Caco-2 (cell line): ENCODE measurements at regions of chr4 and their contacts with region 1.

Region 1: DNA sequence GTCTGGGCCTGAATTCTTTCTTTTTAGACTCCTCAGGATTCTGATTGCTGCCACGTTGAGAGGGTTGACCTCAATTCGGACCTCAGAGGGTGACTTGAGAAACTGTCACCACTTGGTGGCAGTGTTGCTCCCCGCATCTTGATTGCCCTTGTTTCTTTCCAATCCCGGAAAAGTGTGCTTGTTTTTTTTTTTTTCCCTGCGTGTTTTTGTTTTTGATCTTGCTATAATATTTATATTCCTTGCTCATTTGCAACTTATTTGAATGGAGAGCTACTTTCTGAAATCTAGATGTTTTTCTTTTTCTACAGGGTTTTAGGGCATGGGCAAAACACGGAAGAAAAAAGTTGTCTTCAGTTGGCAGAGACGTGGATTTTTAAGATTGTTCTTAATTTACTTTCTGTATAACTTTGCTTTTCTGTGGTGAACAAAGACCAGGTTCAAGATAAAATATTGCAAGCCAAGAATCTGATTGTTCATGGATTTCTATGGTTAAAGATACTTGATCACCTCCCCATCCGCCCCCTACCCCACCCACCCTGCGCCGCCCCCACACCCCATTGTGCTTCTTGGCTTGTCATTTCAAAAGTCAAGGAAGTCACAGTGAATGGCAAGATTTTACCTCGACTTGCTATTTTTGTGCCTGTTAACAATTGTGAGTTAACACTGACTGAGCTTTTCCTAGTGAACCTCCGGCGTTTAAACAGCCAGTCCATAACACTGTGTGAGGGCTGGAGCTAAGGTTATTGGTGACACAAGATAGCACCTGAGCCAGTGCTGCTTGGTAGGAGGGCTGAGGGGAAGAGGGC is 102.1 kb downstream of the PTTG2 start:
- DNase-seq: peak; percentile 65 to 75
- H3K4me3 ChIP-seq: no peak overlapping the region
- H3K4me3 Mint-ChIP-seq: no peak overlapping the region
- H3K27ac Mint-ChIP-seq: no peak overlapping the region
- H3K4me1 ChIP-seq: no peaks in the 10 kb centered on the region
- H3K4me1 Mint-ChIP-seq: no peaks in the 10 kb centered on the region
- H3K27me3 ChIP-seq: no peaks in the 10 kb centered on the region
- H3K27me3 Mint-ChIP-seq: no peaks in the 10 kb centered on the region
- CTCF ChIP-seq: peak; percentile 70 to 82

Region 2: GRCh38 chr4:38149997-38150671 is 87.8 kb after region 1 on chr4:
- CTCF ChIA-PET with region 1: interaction called, 11 read pairs
- POLR2A ChIA-PET with region 1: no interaction called
- intact Hi-C with region 1: no loop called
- DNase-seq: no peak
- H3K4me3 ChIP-seq: no peak overlapping the region
- H3K4me3 Mint-ChIP-seq: no peak overlapping the region
- H3K27ac Mint-ChIP-seq: no peak overlapping the region
- H3K4me1 ChIP-seq: 0 out of 2 replicates have a peak, but pooled peaks cover 3% of the 10 kb centered on the region
- H3K4me1 Mint-ChIP-seq: peaks cover 12% of the 10 kb centered on the region
- H3K27me3 ChIP-seq: no peaks in the 10 kb centered on the region
- H3K27me3 Mint-ChIP-seq: no peaks in the 10 kb centered on the region
- CTCF ChIP-seq: no peak

Region 3: GRCh38 chr4:38166082-38166481 is 103.8 kb after region 1 on chr4:
- CTCF ChIA-PET with region 1: no interaction called
- POLR2A ChIA-PET with region 1: no interaction called
- intact Hi-C with region 1: loop called (anchors 1 kb)
- DNase-seq: peak in 1 of 2 experiments; percentile 15
- H3K4me3 ChIP-seq: no peak overlapping the region
- H3K4me3 Mint-ChIP-seq: no peak overlapping the region
- H3K27ac Mint-ChIP-seq: no peak overlapping the region
- H3K4me1 ChIP-seq: no peaks in the 10 kb centered on the region
- H3K4me1 Mint-ChIP-seq: peaks cover 7% of the 10 kb centered on the region
- H3K27me3 ChIP-seq: no peaks in the 10 kb centered on the region
- H3K27me3 Mint-ChIP-seq: no peaks in the 10 kb centered on the region
- CTCF ChIP-seq: no peak

Region 4: DNA sequence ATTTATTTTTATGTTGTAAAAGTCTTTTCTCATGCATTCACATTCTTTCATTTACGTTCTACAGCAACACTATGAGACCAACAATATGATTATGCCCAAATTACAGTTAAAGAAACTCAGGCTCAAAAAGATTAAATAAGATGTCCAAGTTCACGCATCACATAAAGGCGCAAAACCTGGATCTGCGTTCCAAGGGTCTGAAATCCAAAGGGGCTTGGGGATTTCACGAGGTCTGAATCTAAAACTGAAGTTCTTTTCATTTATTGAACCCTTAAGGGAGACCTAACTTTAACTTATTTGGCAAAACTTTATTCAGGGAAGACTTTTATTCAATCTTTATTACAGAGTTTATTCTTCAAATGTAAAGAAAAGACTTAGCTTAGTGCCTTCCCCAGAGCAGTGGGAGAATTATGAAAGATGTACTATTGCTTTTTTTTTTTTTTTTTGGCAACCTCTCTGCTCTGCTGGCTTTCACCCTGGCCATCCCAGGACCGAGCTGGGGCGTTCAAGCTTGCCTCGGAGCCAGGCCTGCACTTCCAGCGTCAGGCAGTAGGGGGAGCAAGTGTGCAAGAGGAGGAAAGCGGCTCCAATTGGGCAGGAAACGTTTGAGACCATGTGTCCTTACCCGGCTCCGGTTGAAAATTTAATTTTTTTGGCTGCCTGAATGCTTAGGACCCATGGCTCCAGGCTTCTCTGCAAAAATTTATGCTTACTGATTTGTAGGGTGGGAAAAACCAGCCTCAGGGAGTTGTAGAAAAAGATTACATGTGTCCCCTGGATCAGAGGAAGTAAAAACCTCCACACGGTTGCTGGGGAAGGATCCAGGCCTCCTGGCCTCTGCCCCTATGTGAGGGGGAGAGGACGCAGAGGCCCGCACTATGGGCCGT is 257.4 kb after region 1 on chr4:
- CTCF ChIA-PET with region 1: no interaction called
- POLR2A ChIA-PET with region 1: no interaction called
- intact Hi-C with region 1: loop called (anchors 10 kb)
- DNase-seq: peak; percentile 83 to 89
- H3K4me3 ChIP-seq: no peak overlapping the region
- H3K4me3 Mint-ChIP-seq: peak overlapping the region; percentile 64
- H3K27ac Mint-ChIP-seq: no peak overlapping the region
- H3K4me1 ChIP-seq: peaks cover 17% of the 10 kb centered on the region
- H3K4me1 Mint-ChIP-seq: no peaks in the 10 kb centered on the region
- H3K27me3 ChIP-seq: no peaks in the 10 kb centered on the region
- H3K27me3 Mint-ChIP-seq: no peaks in the 10 kb centered on the region
- CTCF ChIP-seq: peak; percentile 91 to 92

Region 5: DNA sequence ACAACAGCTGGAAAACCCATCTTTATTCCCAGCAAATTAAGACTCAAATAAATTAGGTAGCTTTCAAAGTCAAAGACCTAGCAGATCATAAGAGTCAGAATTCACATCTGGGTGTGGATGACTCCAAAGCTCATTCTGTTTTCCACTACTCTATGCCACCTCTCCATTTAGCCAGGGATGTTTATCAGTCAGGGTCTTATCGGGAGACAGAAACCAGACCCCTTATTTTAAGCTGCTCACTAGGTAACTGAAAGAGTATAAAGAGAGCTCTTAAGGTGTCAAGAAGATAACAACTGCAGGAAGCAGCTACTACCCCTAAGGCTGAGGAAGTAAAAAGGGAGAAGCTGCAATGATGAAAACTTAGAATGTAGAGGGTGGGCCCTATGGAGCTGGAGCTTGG is 268.0 kb after region 1 on chr4:
- CTCF ChIA-PET with region 1: no interaction called
- POLR2A ChIA-PET with region 1: no interaction called
- intact Hi-C with region 1: no loop called
- DNase-seq: no peak
- H3K4me3 ChIP-seq: no peak overlapping the region
- H3K4me3 Mint-ChIP-seq: no peak overlapping the region
- H3K27ac Mint-ChIP-seq: no peak overlapping the region
- H3K4me1 ChIP-seq: no peaks in the 10 kb centered on the region
- H3K4me1 Mint-ChIP-seq: no peaks in the 10 kb centered on the region
- H3K27me3 ChIP-seq: no peaks in the 10 kb centered on the region
- H3K27me3 Mint-ChIP-seq: no peaks in the 10 kb centered on the region
- CTCF ChIP-seq: no peak